H1 (cell line): ENCODE measurements at regions of chr19 and their contacts with region 1.

Region 1: DNA sequence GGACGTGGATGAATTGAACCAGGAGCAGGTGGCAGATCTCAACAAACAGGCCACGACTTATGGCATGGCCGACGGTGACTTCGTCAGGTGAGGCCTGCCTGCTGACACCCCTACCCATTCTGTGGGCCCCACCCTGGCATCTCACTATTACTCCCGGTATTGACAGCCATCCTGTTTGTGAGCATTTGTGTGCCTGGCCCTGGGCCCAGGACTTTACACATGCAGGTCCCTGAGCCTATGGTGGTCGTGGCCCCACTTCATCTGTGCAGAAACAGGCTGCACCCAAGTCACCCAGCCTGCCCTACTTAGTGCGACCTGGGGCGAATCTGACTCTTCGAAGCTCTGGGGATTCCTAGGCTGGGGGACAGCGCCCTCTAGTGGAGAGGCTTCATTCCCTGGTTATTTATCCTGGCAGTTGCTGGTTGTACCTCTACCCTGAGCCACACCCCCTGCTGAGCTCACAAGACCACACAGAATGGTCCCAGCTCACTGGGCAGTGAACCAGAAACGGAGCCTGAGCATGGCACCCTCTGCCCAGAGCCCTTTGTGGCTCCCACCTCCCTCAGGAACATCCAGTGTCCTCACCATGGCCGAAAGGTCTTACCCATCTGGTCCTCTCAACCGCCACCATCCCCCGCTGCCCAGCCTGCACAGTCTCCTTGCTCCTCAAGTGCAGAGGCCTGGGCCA is 16.9 kb downstream of the ZNF296 start:
- DNase-seq: peak in 1 of 2 experiments; percentile 98
- H3K4me3 ChIP-seq: no peak overlapping the region
- H3K27ac ChIP-seq: 0 out of 2 replicates have a peak overlapping the region, but pooled peaks have one; percentile 9
- H3K4me1 ChIP-seq: peaks cover 0 to 4% (median 1%) of the 10 kb centered on the region in 4 experiments; a peak in 4 of 7 replicates
- H3K27me3 ChIP-seq: no peaks in the 10 kb centered on the region
- CTCF ChIP-seq: peak; percentile 84 to 95 (median 94)
- EP300 ChIP-seq: no peak
- POLR2A ChIP-seq: no peak
- RAD21 ChIP-seq: peak; percentile 86 to 92

Region 2: DNA sequence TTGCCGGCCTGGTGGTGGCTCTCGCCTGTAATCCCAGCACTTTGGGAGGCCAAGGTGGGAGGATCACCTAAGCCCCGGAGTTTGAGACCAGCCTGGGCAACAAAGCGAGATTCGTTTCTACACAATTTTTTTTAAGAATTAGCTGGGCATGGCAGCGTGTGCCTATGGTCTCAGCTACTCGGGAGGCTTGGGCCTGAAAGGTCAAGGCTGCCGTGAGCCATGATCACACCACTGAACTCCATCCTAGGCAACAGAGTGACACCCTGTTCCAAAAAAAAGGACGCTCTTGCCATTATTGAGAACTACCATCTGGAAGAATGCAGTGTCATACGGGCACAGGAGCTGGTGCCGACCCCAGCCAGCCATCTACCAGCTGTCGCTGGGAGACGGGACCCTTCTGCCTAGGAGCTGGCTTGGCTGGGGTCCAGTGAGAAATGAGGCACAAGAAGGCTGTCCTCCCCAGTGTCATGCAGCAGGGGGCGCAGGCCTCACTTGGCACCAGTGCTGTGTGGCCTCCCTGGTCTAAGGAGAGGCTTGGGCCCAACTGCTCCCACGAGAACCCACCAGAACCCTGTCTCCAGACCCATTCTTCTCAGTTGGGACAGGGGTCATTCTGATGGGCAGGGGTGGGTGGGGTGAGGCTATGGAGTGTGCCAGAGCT is 70.4 kb before region 1 on chr19:
- CTCF ChIA-PET with region 1: interaction called, 34 read pairs
- POLR2A ChIA-PET with region 1: no interaction called
- DNase-seq: peak in 1 of 2 experiments; percentile 87
- H3K4me3 ChIP-seq: no peak overlapping the region
- H3K27ac ChIP-seq: no peak overlapping the region
- H3K4me1 ChIP-seq: no peaks in the 10 kb centered on the region
- H3K27me3 ChIP-seq: no peaks in the 10 kb centered on the region
- CTCF ChIP-seq: peak; percentile 81 to 95 (median 89)
- EP300 ChIP-seq: no peak
- POLR2A ChIP-seq: no peak
- RAD21 ChIP-seq: peak; percentile 59 to 69; a peak in 3 of 4 replicates

Region 3: GRCh38 chr19:45038931-45039893 is 20.2 kb before region 1 on chr19 and contains the start of gene CLASRP:
- CTCF ChIA-PET with region 1: interaction called, 85 read pairs
- POLR2A ChIA-PET with region 1: interaction called, 5 read pairs
- DNase-seq: peak in 1 of 2 experiments; percentile 92
- H3K4me3 ChIP-seq: peak within 1 kb of the TSS; percentile 85 to 95 (median 94)
- H3K27ac ChIP-seq: peak within 1 kb of the TSS; percentile 67
- H3K4me1 ChIP-seq: peaks cover 0 to 7% (median 4%) of the 10 kb centered on the region in 4 experiments; a peak in 6 of 7 replicates
- H3K27me3 ChIP-seq: no peaks in the 10 kb centered on the region
- CTCF ChIP-seq: no peak
- EP300 ChIP-seq: no peak
- POLR2A ChIP-seq: peak; percentile 42 to 84
- RAD21 ChIP-seq: no peak
- total RNA-seq, gene CLASRP: 63.4 and 71.7 TPM in 2 replicates

Region 4: DNA sequence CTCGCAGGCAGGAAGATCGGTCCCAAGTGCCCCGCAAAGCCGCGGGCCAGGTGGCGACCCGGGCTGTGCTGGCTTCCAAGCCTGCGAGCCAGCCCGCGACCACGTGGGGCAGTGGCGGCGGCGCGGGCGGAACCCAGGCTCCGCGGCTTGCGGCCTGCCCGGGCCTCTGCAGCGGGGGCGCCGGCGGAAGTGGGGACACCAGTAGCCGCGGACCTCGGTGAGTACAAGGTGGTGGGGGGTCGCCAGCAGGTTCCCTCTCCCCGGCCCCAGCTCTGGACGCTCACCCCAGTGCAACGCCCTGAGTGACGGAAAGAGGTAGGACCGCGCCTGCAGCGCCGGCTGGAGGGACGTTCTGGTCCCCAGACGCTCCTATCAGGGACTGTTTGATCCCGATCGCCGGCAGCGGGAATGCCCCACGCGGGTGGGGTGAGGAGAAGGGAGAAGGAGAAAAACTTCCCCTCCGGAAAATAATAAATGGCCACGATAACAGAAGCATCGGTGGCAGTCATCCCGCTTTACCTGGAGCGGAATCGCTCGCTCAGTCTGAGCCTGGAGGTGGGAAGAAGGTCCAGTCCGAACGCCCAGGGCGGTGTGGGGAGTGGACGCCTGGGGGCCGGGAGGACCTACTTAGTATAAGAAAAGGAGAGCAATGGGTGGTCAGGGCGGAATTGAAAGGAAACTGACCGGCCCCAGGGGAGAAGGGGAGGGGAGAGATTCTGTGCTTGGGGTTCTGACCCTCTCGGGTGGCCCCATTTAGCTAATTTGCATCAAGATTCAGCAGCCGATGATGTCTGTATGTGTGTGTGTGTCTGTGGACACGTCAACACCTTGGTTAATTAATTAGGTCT is 19.9 kb after region 1 on chr19 and contains the start of gene GEMIN7:
- CTCF ChIA-PET with region 1: interaction called, 8 read pairs
- POLR2A ChIA-PET with region 1: interaction called, 61 read pairs
- DNase-seq: peak in 1 of 2 experiments; percentile 92
- H3K4me3 ChIP-seq: peak within 1 kb of the TSS; percentile 87 to 98 (median 94)
- H3K27ac ChIP-seq: peak within 1 kb of the TSS; percentile 94
- H3K4me1 ChIP-seq: peaks cover 13 to 37% (median 20%) of the 10 kb centered on the region in 4 experiments
- H3K27me3 ChIP-seq: no peaks in the 10 kb centered on the region
- CTCF ChIP-seq: peak in 2 of 3 experiments; percentile 6 to 34; a peak in 3 of 4 replicates
- EP300 ChIP-seq: peak in 1 of 2 experiments; percentile 93; a peak in 1 of 3 replicates
- POLR2A ChIP-seq: peak in 1 of 2 experiments; percentile 51; a peak in 1 of 3 replicates
- RAD21 ChIP-seq: no peak; a peak in 1 of 4 replicates
- total RNA-seq, gene GEMIN7: 48.0 and 48.5 TPM in 2 replicates

Region 5: GRCh38 chr19:45336696-45337251 is 277.4 kb after region 1 on chr19:
- CTCF ChIA-PET with region 1: no interaction called
- POLR2A ChIA-PET with region 1: no interaction called
- DNase-seq: no peak
- H3K4me3 ChIP-seq: no peak overlapping the region
- H3K27ac ChIP-seq: no peak overlapping the region
- H3K4me1 ChIP-seq: peaks cover 0 to 3% (median 0%) of the 10 kb centered on the region in 4 experiments; a peak in 4 of 7 replicates
- H3K27me3 ChIP-seq: peaks cover 4 to 10% (median 10%) of the 10 kb centered on the region in 4 experiments; a peak in 6 of 7 replicates
- CTCF ChIP-seq: no peak
- EP300 ChIP-seq: no peak
- POLR2A ChIP-seq: no peak
- RAD21 ChIP-seq: no peak